PC-9 (cell line): ENCODE measurements at regions of chr14 and their contacts with region 1.

Region 1: GRCh38 chr14:80434574-80435321 is 223.4 kb upstream of the DIO2 start:
- DNase-seq: peak; percentile 74 to 94
- H3K4me3 ChIP-seq: no peak overlapping the region
- H3K27ac ChIP-seq: peak overlapping the region; percentile 86
- H3K4me1 ChIP-seq: peaks cover 39% of the 10 kb centered on the region
- H3K27me3 ChIP-seq: no peaks in the 10 kb centered on the region
- CTCF ChIP-seq: no peak

Region 2: DNA sequence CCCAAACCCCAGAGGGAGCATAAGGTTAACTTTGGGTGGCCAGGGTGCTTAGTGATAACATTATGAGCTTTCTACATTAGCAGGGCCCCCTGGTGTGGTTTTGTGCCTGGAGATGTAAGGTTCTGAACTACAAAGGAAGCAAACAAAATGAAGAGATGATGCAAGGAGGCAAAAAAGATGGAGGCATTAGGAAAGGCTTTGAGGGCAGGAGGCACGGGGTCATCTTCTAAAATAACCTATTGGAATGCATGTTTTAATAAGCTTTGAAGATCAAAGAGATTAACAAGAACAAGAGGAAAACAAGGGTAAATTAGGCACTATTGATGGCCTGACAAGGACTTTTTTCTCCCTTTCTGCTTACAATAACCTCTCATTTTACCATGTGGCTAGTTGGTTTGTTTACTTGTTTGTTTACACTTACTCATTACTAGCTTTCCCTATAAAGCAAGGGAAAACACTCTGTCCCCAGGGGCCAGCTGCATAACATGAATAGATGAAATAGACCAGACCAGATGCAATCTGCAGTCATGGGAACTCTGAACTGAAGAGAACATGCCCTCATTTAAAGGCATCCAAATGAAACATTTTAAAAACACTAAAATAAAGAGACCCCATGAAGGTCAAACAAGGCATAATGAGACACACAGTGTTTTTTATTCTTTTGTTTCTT is 613.7 kb before region 1 on chr14:
- CTCF ChIA-PET with region 1: no interaction called
- POLR2A ChIA-PET with region 1: no interaction called
- intact Hi-C with region 1: no loop called
- DNase-seq: no peak
- H3K4me3 ChIP-seq: no peak overlapping the region
- H3K27ac ChIP-seq: no peak overlapping the region
- H3K4me1 ChIP-seq: no peaks in the 10 kb centered on the region
- H3K27me3 ChIP-seq: no peaks in the 10 kb centered on the region
- CTCF ChIP-seq: no peak

Region 3: DNA sequence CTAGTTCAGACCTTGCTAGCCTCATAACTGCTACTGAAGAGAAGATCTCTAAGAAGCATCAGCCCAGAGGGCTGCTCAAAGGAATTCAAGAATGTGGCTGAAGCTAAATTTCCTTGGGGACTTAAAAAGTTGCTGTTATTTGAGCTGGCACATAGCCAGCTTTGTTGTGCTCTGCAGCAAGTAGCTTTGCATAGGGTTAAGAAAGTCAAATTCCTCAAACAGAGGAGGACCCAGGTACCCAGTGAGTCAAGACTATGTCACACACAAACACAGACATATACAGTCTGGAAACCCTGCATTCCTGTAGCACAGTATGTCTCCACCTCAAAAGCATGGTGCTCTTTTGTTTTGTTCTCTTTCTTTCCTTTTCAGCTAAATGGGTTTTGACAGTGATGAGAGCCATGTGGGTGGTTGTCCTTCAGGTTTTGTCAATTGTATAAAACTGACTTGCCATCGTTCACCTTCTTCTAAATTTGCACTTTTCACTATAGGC is 43.9 kb before region 1 on chr14:
- CTCF ChIA-PET with region 1: no interaction called
- POLR2A ChIA-PET with region 1: no interaction called
- intact Hi-C with region 1: loop called (anchors 2 kb)
- DNase-seq: peak; percentile 59 to 87
- H3K4me3 ChIP-seq: no peak overlapping the region
- H3K27ac ChIP-seq: peak overlapping the region; percentile 49
- H3K4me1 ChIP-seq: peaks cover 40% of the 10 kb centered on the region
- H3K27me3 ChIP-seq: no peaks in the 10 kb centered on the region
- CTCF ChIP-seq: no peak

Region 4: DNA sequence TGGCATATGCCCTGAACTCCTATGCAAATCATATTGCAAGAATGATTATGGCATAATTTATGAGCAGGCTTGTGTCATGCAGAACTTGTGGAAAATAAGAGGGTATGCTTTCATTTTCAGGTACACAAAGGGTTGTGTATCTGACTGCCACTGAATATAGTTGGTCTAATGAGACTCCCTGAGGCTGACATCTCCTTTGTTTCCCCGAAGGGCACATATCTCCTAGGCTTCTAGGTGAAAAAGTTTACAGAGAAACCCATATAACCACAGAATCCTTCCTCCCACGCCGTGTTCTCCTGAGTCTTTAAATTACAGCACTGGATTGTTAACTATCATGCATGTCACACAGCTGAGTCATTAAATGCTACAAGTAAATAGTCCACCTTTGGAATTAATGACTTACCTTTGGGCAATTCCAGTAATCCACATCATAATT is 133.3 kb after region 1 on chr14:
- CTCF ChIA-PET with region 1: no interaction called
- POLR2A ChIA-PET with region 1: no interaction called
- intact Hi-C with region 1: loop called (anchors 2 kb)
- DNase-seq: peak; percentile 38 to 86
- H3K4me3 ChIP-seq: no peak overlapping the region
- H3K27ac ChIP-seq: peak overlapping the region; percentile 62
- H3K4me1 ChIP-seq: peaks cover 30% of the 10 kb centered on the region
- H3K27me3 ChIP-seq: no peaks in the 10 kb centered on the region
- CTCF ChIP-seq: no peak

Region 5: DNA sequence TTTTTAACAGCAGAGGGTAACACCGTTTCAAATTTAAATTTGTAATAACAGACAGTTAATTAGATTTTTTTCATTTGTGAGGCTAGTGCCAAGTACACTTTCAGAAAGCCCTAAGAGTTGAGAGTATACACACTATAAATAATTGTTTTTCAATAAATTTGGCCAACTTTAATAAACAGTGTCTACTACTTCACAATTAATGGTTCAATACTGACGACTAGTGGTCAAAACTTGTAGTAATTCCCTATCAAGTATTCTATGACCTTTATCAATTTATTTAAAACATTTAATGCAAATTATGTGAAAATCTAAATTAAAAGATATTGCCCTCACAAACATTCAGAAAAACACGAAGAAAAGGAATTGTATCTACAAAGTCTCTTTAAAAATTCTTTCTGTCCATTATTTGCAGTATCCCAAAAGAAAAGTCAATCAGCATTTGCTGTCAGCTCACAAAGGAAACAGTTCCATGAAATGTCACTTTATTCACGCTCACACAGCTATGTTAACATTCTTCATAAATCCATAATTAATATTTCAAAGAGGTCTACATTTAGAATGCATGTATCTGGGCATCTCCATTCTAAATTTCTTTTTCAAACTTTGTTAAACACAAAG is 415.6 kb after region 1 on chr14:
- CTCF ChIA-PET with region 1: no interaction called
- POLR2A ChIA-PET with region 1: no interaction called
- intact Hi-C with region 1: loop called (anchors 10 kb)
- DNase-seq: no peak
- H3K4me3 ChIP-seq: no peak overlapping the region
- H3K27ac ChIP-seq: no peak overlapping the region
- H3K4me1 ChIP-seq: peaks cover 7% of the 10 kb centered on the region; the same call in 1 of the 2 replicates
- H3K27me3 ChIP-seq: no peaks in the 10 kb centered on the region
- CTCF ChIP-seq: peak; percentile 94

Region 6: DNA sequence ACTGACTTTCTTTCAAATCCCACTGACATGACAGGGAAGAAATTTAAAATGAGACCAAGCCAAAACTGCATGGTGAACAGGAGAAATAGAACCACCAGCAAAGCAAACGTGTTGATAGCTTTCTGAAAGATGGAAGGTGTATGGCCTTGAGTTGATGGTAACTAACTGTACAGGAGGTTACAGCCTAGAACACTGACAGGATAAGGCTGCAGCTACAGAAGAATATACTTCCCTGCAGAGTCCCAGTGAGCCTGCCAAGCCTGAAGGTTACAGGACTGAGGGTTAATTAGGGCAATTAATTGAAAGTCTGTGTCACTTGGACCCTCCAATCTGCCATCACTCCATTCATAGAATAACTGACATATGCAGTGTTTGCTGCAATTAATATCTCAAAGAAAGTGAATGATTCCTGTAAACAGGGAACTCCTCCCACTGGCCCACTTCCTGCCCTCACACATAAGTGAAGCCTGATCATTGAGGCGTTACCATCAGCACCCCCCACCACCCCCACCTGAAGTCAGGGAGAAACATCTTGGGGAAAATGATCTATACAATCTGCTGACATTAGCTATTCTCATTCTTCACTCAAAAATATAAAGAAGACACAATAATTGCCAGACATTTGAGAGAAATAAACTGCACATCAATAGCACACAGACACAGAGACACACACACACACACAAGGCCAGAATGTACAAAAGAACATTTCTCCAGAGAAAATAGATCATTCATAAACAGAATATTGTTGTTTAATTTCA is 712.6 kb after region 1 on chr14:
- CTCF ChIA-PET with region 1: no interaction called
- POLR2A ChIA-PET with region 1: no interaction called
- intact Hi-C with region 1: no loop called
- DNase-seq: no peak
- H3K4me3 ChIP-seq: no peak overlapping the region
- H3K27ac ChIP-seq: no peak overlapping the region
- H3K4me1 ChIP-seq: no peaks in the 10 kb centered on the region
- H3K27me3 ChIP-seq: no peaks in the 10 kb centered on the region
- CTCF ChIP-seq: no peak